GM12878 (cell line): ENCODE measurements at regions of chr9 and their contacts with region 1.

Region 1: DNA sequence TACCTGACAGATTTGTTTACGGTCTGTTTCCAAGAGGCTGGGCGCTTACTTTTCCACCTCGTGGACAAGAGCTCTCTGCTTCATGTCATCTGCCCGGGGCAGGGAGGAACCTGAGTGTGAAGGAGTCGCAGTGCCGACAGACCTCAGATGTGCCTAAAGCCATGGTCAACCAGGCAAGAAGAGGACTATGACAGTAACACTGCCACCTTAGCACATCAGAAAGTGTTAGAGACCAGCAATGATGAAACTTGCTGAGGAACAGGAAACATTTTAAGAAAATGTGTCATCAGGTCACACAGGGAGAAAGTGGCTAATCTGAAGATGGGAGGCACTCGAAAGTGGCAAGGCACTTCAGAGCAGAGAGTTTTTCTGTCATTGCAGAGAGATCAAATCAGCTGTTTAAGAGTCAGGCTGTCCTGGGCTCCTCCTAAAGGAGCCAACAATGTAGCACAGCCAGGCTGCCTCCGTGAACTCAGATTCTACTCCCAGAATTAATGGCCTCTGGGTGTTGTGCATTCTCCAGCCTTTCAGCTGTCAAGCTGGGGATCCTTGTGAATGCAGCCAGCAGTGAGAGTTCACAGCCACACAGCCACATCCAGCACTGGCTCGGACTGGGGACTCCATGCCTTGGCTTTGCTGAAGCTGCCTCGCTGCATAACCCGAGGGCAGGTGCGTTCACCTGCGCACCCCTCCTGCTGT is 94.6 kb downstream of the RAPGEF1 start:
- DNase-seq: no peak
- ATAC-seq: peak; percentile 68
- H3K4me3 ChIP-seq: no peak overlapping the region
- H3K27ac ChIP-seq: peak overlapping the region; percentile 20
- H3K4me1 ChIP-seq: peaks cover 28% of the 10 kb centered on the region
- H3K27me3 ChIP-seq: no peaks in the 10 kb centered on the region
- CTCF ChIP-seq: no peak
- EP300 ChIP-seq: no peak
- POLR2A ChIP-seq: no peak
- RAD21 ChIP-seq: no peak

Region 2: DNA sequence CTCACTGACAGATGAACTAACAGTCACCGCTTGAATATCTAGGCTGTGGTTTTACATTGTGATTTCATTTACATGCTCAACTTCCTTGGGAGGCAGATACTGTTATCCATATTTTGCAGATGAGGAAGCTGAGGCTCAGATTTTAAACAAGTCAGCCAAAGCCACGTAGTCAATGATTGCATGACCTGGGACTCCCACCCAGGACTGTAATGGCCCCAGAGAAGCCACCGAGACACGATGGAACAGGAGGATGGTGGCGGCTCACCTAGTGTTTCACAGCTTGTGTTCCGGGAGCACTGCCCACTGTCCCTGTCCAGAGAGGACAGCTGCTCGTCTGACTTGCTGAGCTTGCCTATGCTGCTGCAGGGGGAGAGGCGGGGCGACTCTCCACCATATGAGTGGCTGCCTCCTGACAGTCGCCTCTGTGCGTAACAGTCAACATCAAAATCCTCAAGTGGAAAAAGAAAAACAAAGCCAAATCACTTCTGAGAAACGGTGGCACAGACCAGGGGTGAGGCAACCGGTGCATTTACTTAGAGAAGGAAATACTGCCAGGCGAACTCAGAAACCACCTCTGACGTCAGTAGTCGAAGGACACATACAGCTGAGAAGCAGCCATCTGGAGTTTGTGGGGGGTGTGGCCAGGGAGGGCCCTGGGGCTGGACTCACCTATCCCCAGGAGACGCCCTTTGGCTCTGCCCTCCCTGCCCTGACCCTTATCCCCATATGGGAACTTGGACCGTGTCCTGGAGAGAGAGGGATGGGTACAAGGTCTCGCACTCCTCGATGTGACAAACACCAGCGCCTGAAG is 17.4 kb before region 1 on chr9:
- CTCF ChIA-PET with region 1: interaction called, 5 read pairs
- POLR2A ChIA-PET with region 1: interaction called, 10 read pairs
- RAD21 ChIA-PET with region 1: interaction called, 16 read pairs
- SMC1A ChIA-PET with region 1: interaction called, 50 read pairs
- in situ Hi-C with region 1: no loop called
- intact Hi-C with region 1: no loop called
- DNase-seq: no peak
- ATAC-seq: peak; percentile 48
- H3K4me3 ChIP-seq: no peak overlapping the region
- H3K27ac ChIP-seq: peak overlapping the region; percentile 88
- H3K4me1 ChIP-seq: peaks cover 44% of the 10 kb centered on the region
- H3K27me3 ChIP-seq: no peaks in the 10 kb centered on the region
- CTCF ChIP-seq: no peak
- EP300 ChIP-seq: no peak
- POLR2A ChIP-seq: 0 out of 2 replicates have a peak, but pooled peaks have one; percentile 22
- RAD21 ChIP-seq: no peak

Region 3: GRCh38 chr9:131656356-131657036 is 11.3 kb after region 1 on chr9:
- CTCF ChIA-PET with region 1: interaction called, 4 read pairs
- POLR2A ChIA-PET with region 1: interaction called, 10 read pairs
- RAD21 ChIA-PET with region 1: interaction called, 3 read pairs
- SMC1A ChIA-PET with region 1: interaction called, 15 read pairs
- in situ Hi-C with region 1: no loop called
- intact Hi-C with region 1: no loop called
- DNase-seq: peak; percentile 87
- ATAC-seq: peak; percentile 94
- H3K4me3 ChIP-seq: peak overlapping the region; percentile 47; the same call in 1 of the 2 replicates
- H3K27ac ChIP-seq: peak overlapping the region; percentile 72
- H3K4me1 ChIP-seq: peaks cover 57% of the 10 kb centered on the region
- H3K27me3 ChIP-seq: no peaks in the 10 kb centered on the region
- CTCF ChIP-seq: no peak
- EP300 ChIP-seq: no peak
- POLR2A ChIP-seq: no peak; the same call in 1 of the 2 replicates
- RAD21 ChIP-seq: no peak

Region 4: GRCh38 chr9:131668439-131669268 is 23.4 kb after region 1 on chr9:
- CTCF ChIA-PET with region 1: interaction called, 7 read pairs
- POLR2A ChIA-PET with region 1: no interaction called
- RAD21 ChIA-PET with region 1: interaction called, 18 read pairs
- SMC1A ChIA-PET with region 1: interaction called, 14 read pairs
- in situ Hi-C with region 1: no loop called
- intact Hi-C with region 1: no loop called
- DNase-seq: peak; percentile 62
- ATAC-seq: peak; percentile 74
- H3K4me3 ChIP-seq: peak overlapping the region; percentile 54
- H3K27ac ChIP-seq: peak overlapping the region; percentile 88
- H3K4me1 ChIP-seq: peaks cover 72% of the 10 kb centered on the region
- H3K27me3 ChIP-seq: no peaks in the 10 kb centered on the region
- CTCF ChIP-seq: peak; percentile 3 to 5 (median 4); a peak in 1 of 6 replicates
- EP300 ChIP-seq: peak; percentile 25 to 47; a peak in 2 of 4 replicates
- POLR2A ChIP-seq: peak; percentile 11; the same call in 1 of the 2 replicates
- RAD21 ChIP-seq: no peak; the same call in 1 of the 2 replicates

Region 5: GRCh38 chr9:131722009-131722629 is 76.9 kb after region 1 on chr9:
- CTCF ChIA-PET with region 1: no interaction called
- POLR2A ChIA-PET with region 1: no interaction called
- RAD21 ChIA-PET with region 1: interaction called, 8 read pairs
- SMC1A ChIA-PET with region 1: interaction called, 10 read pairs
- in situ Hi-C with region 1: no loop called
- intact Hi-C with region 1: no loop called
- DNase-seq: no peak
- ATAC-seq: no peak
- H3K4me3 ChIP-seq: no peak overlapping the region
- H3K27ac ChIP-seq: no peak overlapping the region
- H3K4me1 ChIP-seq: peaks cover 66% of the 10 kb centered on the region
- H3K27me3 ChIP-seq: no peaks in the 10 kb centered on the region
- CTCF ChIP-seq: no peak
- EP300 ChIP-seq: no peak
- POLR2A ChIP-seq: no peak
- RAD21 ChIP-seq: no peak